Left ventricle myocardium inferior (tissue), 1 donor: ENCODE measurements at regions of chr14 and their contacts with region 1.

Region 1: GRCh38 chr14:65222440-65222858 is 120.1 kb upstream of the MAX start:
- DNase-seq: peak; percentile 28
- H3K4me3 ChIP-seq: no peak overlapping the region
- H3K27ac ChIP-seq: no peak overlapping the region
- H3K4me1 ChIP-seq: peaks cover 18% of the 10 kb centered on the region
- H3K27me3 ChIP-seq: no peaks in the 10 kb centered on the region
- CTCF ChIP-seq: peak; percentile 82

Region 2: GRCh38 chr14:65243766-65244442 is 21.5 kb after region 1 on chr14:
- intact Hi-C with region 1: no loop called
- DNase-seq: no peak
- H3K4me3 ChIP-seq: no peak overlapping the region
- H3K27ac ChIP-seq: no peak overlapping the region
- H3K4me1 ChIP-seq: peaks cover 12% of the 10 kb centered on the region
- H3K27me3 ChIP-seq: no peaks in the 10 kb centered on the region
- CTCF ChIP-seq: no peak

Region 3: GRCh38 chr14:65412032-65412846 is 189.8 kb after region 1 on chr14 and contains the start of gene FUT8:
- intact Hi-C with region 1: loop called (anchors 10 kb)
- DNase-seq: peak; percentile 94
- H3K4me3 ChIP-seq: peak within 1 kb of the TSS; percentile 91
- H3K27ac ChIP-seq: peak within 1 kb of the TSS; percentile 97
- H3K4me1 ChIP-seq: peaks cover 36% of the 10 kb centered on the region
- H3K27me3 ChIP-seq: no peaks in the 10 kb centered on the region
- CTCF ChIP-seq: peak; percentile 72
- total RNA-seq, gene FUT8: 7.8 TPM